IMR-90 (cell line): ENCODE measurements at regions of chr15 and their contacts with region 1.

Region 1: GRCh38 chr15:41465822-41466421 is 27.8 kb upstream of the ITPKA start:
- DNase-seq: peak; percentile 74
- ATAC-seq: peak; percentile 91
- H3K4me3 ChIP-seq: no peak overlapping the region
- H3K27ac ChIP-seq: no peak overlapping the region
- H3K4me1 ChIP-seq: peaks cover 4% of the 10 kb centered on the region
- H3K27me3 ChIP-seq: no peaks in the 10 kb centered on the region
- CTCF ChIP-seq: peak; percentile 97
- POLR2A ChIP-seq: 0 out of 2 replicates have a peak, but pooled peaks have one; percentile 25
- RAD21 ChIP-seq: peak; percentile 91

Region 2: GRCh38 chr15:41438206-41438605 is 27.7 kb before region 1 on chr15:
- CTCF ChIA-PET with region 1: interaction called, 11 read pairs
- POLR2A ChIA-PET with region 1: no interaction called
- dilution Hi-C with region 1: no loop called
- in situ Hi-C with region 1: no loop called
- intact Hi-C with region 1: no loop called
- DNase-seq: peak; percentile 44
- ATAC-seq: no peak
- H3K4me3 ChIP-seq: no peak overlapping the region
- H3K27ac ChIP-seq: no peak overlapping the region
- H3K4me1 ChIP-seq: peaks cover 3% of the 10 kb centered on the region
- H3K27me3 ChIP-seq: no peaks in the 10 kb centered on the region
- CTCF ChIP-seq: no peak
- POLR2A ChIP-seq: no peak
- RAD21 ChIP-seq: no peak

Region 3: GRCh38 chr15:41557673-41558399 is 91.9 kb after region 1 on chr15:
- CTCF ChIA-PET with region 1: no interaction called
- POLR2A ChIA-PET with region 1: no interaction called
- dilution Hi-C with region 1: no loop called
- in situ Hi-C with region 1: no loop called
- intact Hi-C with region 1: loop called (anchors 5 kb)
- DNase-seq: peak; percentile 67
- ATAC-seq: peak; percentile 50
- H3K4me3 ChIP-seq: no peak overlapping the region; the same call in 1 of the 2 replicates
- H3K27ac ChIP-seq: no peak overlapping the region
- H3K4me1 ChIP-seq: peaks cover 25% of the 10 kb centered on the region
- H3K27me3 ChIP-seq: no peaks in the 10 kb centered on the region
- CTCF ChIP-seq: peak; percentile 81
- POLR2A ChIP-seq: no peak
- RAD21 ChIP-seq: peak; percentile 87

Region 4: DNA sequence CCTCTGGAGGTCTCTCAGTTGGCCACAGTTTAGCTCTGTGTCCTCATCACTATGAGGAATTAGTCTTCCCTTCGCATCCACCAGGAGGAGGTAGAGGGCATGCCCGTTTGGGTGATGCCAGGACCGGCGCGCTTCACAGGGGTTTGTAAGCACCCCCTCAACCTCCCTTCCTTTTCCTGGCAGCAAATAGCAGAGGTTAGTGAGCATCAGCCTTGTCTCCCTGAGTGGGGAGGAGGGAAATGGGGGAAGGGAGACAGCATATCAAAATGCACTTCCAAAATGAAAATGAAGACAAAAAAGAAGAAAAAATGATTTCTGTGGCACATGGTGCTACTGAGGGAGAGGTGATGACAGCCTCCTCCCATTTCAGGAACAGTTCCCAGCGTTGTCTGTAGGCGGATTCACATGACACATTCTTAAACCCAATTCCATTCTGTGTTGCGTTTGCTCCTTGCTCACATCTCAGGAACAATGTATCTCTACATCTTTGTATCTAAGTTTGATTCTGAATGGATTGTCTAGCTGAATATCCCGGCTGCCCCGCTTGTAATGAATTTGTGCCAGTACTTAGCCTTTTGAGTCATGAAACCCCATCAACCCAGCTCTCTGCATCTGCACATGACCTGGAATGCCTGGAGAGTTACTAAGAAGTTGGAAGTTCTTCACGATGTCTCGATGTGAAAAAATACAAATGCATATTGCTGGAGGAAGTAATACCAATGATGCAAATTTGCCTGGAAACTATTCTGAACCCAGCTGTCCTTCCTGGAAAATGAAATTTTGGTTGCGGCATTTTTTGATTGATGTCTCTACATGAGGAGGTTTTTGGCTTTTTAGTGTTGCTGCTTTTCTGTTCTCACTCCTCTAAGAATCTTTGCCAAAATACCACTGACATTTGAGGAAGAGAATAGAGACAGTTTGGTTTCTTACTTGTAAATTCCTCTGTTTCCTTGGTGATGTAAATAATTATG is 138.3 kb after region 1 on chr15:
- CTCF ChIA-PET with region 1: no interaction called
- POLR2A ChIA-PET with region 1: no interaction called
- dilution Hi-C with region 1: no loop called
- in situ Hi-C with region 1: no loop called
- intact Hi-C with region 1: loop called (anchors 5 kb)
- DNase-seq: peak; percentile 91
- ATAC-seq: peak; percentile 84
- H3K4me3 ChIP-seq: peak overlapping the region; percentile 31; the same call in 1 of the 2 replicates
- H3K27ac ChIP-seq: no peak overlapping the region
- H3K4me1 ChIP-seq: peaks cover 6% of the 10 kb centered on the region
- H3K27me3 ChIP-seq: no peaks in the 10 kb centered on the region
- CTCF ChIP-seq: peak; percentile 73
- POLR2A ChIP-seq: no peak
- RAD21 ChIP-seq: peak; percentile 71

Region 5: GRCh38 chr15:41904541-41905005 is 438.7 kb after region 1 on chr15:
- CTCF ChIA-PET with region 1: no interaction called
- POLR2A ChIA-PET with region 1: no interaction called
- dilution Hi-C with region 1: no loop called
- in situ Hi-C with region 1: no loop called
- intact Hi-C with region 1: loop called (anchors 1 kb)
- DNase-seq: peak; percentile 65
- ATAC-seq: peak; percentile 98
- H3K4me3 ChIP-seq: no peak overlapping the region
- H3K27ac ChIP-seq: no peak overlapping the region
- H3K4me1 ChIP-seq: no peaks in the 10 kb centered on the region
- H3K27me3 ChIP-seq: no peaks in the 10 kb centered on the region
- CTCF ChIP-seq: peak; percentile 85
- POLR2A ChIP-seq: no peak
- RAD21 ChIP-seq: peak; percentile 92

Region 6: GRCh38 chr15:41972253-41973242 is 506.6 kb after region 1 on chr15 and contains the start of gene EHD4:
- CTCF ChIA-PET with region 1: no interaction called
- POLR2A ChIA-PET with region 1: no interaction called
- dilution Hi-C with region 1: no loop called
- in situ Hi-C with region 1: no loop called
- intact Hi-C with region 1: no loop called
- DNase-seq: peak; percentile 99
- ATAC-seq: peak; percentile 96
- H3K4me3 ChIP-seq: peak within 1 kb of the TSS; percentile 96
- H3K27ac ChIP-seq: peak within 1 kb of the TSS; percentile 65
- H3K4me1 ChIP-seq: peaks cover 6% of the 10 kb centered on the region
- H3K27me3 ChIP-seq: peaks cover 2% of the 10 kb centered on the region; the same call in 1 of the 2 replicates
- CTCF ChIP-seq: peak; percentile 39; the same call in 1 of the 2 replicates
- POLR2A ChIP-seq: peak; percentile 89
- RAD21 ChIP-seq: no peak; the same call in 1 of the 2 replicates
- total RNA-seq, gene EHD4: 26.4 and 29.0 TPM in 2 replicates